ENCODE measurements at regions of chr18 and their contacts with region 1.

Region 1: GRCh38 chr18:2655178-2655953 is at the start of gene SMCHD1:
- DNase-seq: peak; percentile 93
- H3K4me3 Mint-ChIP-seq: peak within 1 kb of the TSS; percentile 93
- H3K27ac Mint-ChIP-seq: peak within 1 kb of the TSS; percentile 96
- H3K4me1 Mint-ChIP-seq: peaks cover 34% of the 10 kb centered on the region
- H3K27me3 Mint-ChIP-seq: no peaks in the 10 kb centered on the region
- total RNA-seq, gene SMCHD1: 91.3 to 91.5 TPM

Region 2: GRCh38 chr18:812376-813171 is 1842.8 kb before region 1 on chr18:
- CTCF ChIA-PET with region 1: no interaction called
- intact Hi-C with region 1: loop called (anchors 5 kb)
- DNase-seq: peak; percentile 82
- H3K4me3 Mint-ChIP-seq: peak overlapping the region; percentile 95
- H3K27ac Mint-ChIP-seq: peak overlapping the region; percentile 99
- H3K4me1 Mint-ChIP-seq: peaks cover 54% of the 10 kb centered on the region
- H3K27me3 Mint-ChIP-seq: no peaks in the 10 kb centered on the region

Region 3: DNA sequence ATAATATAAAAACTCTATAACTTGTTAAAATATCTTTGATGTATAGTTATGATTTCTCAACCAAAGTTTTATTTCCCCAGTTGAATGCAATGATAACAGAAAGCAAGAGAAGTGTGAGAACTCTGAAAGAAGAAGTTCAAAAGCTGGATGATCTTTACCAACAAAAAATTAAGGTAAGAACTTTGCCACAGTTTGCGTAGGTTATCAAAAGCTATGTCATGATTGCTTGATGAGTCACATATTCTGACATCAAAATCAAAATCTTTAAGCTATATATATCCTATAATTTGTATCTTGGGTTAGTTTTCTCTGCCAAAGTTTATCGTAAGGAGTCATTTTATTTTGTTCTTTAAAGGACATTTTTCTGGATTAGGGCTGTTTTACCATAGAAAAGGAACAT is 49.0 kb before region 1 on chr18:
- CTCF ChIA-PET with region 1: no interaction called
- intact Hi-C with region 1: loop called (anchors 1 kb)
- DNase-seq: no peak
- H3K4me3 Mint-ChIP-seq: no peak overlapping the region
- H3K27ac Mint-ChIP-seq: peak overlapping the region; percentile 79
- H3K4me1 Mint-ChIP-seq: peaks cover 49% of the 10 kb centered on the region
- H3K27me3 Mint-ChIP-seq: no peaks in the 10 kb centered on the region

Region 4: DNA sequence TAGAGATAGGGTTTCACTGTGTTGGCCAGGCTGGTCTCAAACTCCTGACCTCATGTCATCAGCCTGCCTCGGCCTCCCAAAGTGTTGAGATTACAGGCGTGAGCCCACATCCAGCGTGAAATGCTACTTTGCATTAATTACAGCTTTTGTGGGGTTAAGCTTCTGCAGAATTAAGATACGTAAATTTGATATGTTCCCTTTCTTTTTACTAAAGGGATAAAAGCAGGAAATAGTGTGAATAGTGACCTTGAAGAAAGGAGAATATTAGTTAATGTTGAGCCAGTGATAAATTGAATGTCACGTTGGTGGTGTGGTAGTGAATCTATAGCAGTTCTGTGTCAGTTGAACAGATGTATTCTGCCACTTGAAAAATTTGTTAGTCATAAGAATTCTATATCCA is 17.0 kb after region 1 on chr18:
- CTCF ChIA-PET with region 1: no interaction called
- intact Hi-C with region 1: loop called (anchors 2 kb)
- DNase-seq: no peak
- H3K4me3 Mint-ChIP-seq: no peak overlapping the region
- H3K27ac Mint-ChIP-seq: peak overlapping the region; percentile 51
- H3K4me1 Mint-ChIP-seq: peaks cover 43% of the 10 kb centered on the region
- H3K27me3 Mint-ChIP-seq: no peaks in the 10 kb centered on the region

Region 5: DNA sequence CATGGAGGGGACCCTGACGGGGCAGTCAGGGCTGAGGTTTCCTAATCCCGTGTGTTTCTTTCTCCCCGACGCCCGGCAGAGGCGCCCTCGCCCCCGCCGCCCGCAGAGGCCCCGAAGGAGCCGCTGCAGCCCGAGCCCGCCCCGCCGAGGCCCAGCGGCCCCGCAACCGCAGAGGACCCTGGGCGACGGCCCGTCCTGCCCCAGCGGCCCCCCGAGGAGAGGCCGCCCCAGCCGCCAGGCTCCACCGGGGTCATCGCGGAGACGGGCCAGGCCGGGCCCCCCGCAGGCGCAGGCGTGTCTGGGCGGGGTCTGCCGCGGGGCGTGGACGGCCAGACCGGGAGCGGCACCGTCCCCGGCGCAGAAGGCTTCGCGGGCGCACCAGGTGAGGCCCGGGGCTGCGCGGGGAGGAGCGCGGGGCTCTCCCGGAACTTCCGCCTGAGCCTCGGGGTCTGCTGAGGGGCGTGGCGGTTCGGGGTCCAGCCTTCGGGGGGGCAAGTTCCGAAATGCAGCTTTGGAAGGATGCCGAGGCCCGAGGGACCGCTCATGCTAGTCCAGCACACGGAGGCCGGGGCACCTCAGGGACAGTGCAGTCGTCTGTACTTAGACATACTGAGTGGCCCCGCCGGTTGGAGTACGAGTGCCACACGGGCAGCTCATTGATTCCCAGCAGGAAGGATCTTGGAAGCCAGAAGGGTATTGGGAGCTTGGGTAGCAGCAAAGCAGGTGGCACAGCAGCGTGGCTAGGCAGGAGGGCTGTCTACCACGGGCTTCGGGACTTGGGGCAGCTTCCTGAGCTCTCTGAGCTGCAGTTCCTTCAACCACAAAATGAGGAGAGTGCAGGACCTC is 251.6 kb after region 1 on chr18:
- CTCF ChIA-PET with region 1: no interaction called
- intact Hi-C with region 1: loop called (anchors 5 kb)
- DNase-seq: peak; percentile 51
- H3K4me3 Mint-ChIP-seq: peak overlapping the region; percentile 81
- H3K27ac Mint-ChIP-seq: peak overlapping the region; percentile 33
- H3K4me1 Mint-ChIP-seq: peaks cover 12% of the 10 kb centered on the region
- H3K27me3 Mint-ChIP-seq: no peaks in the 10 kb centered on the region

Region 6: GRCh38 chr18:3012964-3013804 is 357.8 kb after region 1 on chr18 and contains the start of gene LPIN2:
- CTCF ChIA-PET with region 1: no interaction called
- intact Hi-C with region 1: loop called (anchors 1 kb)
- DNase-seq: peak; percentile 97
- H3K4me3 Mint-ChIP-seq: peak within 1 kb of the TSS; percentile 84
- H3K27ac Mint-ChIP-seq: peak within 1 kb of the TSS; percentile 92
- H3K4me1 Mint-ChIP-seq: peaks cover 68% of the 10 kb centered on the region
- H3K27me3 Mint-ChIP-seq: no peaks in the 10 kb centered on the region
- total RNA-seq, gene LPIN2: 62.4 to 65.7 TPM

Measured in activated naive CD4-positive, alpha-beta T cell treated with anti-CD3 and anti-CD28 coated beads for 36 hours (primary cell).